ENCODE measurements at regions of chr9 and their contacts with region 1.

Region 1: GRCh38 chr9:72292256-72292682 is 72.7 kb downstream of the ZFAND5 start:
- DNase-seq: no peak
- H3K4me3 ChIP-seq: no peak overlapping the region
- H3K27ac ChIP-seq: no peak overlapping the region
- H3K4me1 ChIP-seq: peaks cover 6% of the 10 kb centered on the region
- H3K27me3 ChIP-seq: no peaks in the 10 kb centered on the region
- CTCF ChIP-seq: peak; percentile 33 to 57 (median 51)
- POLR2A ChIP-seq: no peak

Region 2: GRCh38 chr9:72334658-72335337 is 42.5 kb after region 1 on chr9:
- intact Hi-C with region 1: no loop called
- DNase-seq: no peak
- H3K4me3 ChIP-seq: no peak overlapping the region
- H3K27ac ChIP-seq: no peak overlapping the region
- H3K4me1 ChIP-seq: no peaks in the 10 kb centered on the region
- H3K27me3 ChIP-seq: no peaks in the 10 kb centered on the region
- CTCF ChIP-seq: no peak
- POLR2A ChIP-seq: no peak

Region 3: GRCh38 chr9:72592502-72593403 is 300.5 kb after region 1 on chr9:
- intact Hi-C with region 1: loop called (anchors 10 kb)
- DNase-seq: no peak
- H3K4me3 ChIP-seq: no peak overlapping the region
- H3K27ac ChIP-seq: peak overlapping the region; percentile 20
- H3K4me1 ChIP-seq: peaks cover 15% of the 10 kb centered on the region
- H3K27me3 ChIP-seq: no peaks in the 10 kb centered on the region
- CTCF ChIP-seq: peak; percentile 64 to 86 (median 78)
- POLR2A ChIP-seq: no peak

Measured in vagina (tissue), 2 donors.